T-cell (primary cell): ENCODE measurements at regions of chr16 and their contacts with region 1.

Region 1: GRCh38 chr16:11407047-11407982 is 62.1 kb downstream of the RMI2 start:
- DNase-seq: peak; percentile 17 to 79 (median 55)
- ATAC-seq: peak in 3 of 4 experiments; percentile 47 to 72 (median 62)
- H3K4me3 ChIP-seq: no peak overlapping the region
- H3K4me3 Mint-ChIP-seq: no peak overlapping the region
- H3K27ac ChIP-seq: no peak overlapping the region
- H3K27ac Mint-ChIP-seq: no peak overlapping the region
- H3K4me1 ChIP-seq: no peaks in the 10 kb centered on the region
- H3K4me1 Mint-ChIP-seq: peaks cover 0 to 3% (median 0%) of the 10 kb centered on the region in 3 donors
- H3K27me3 ChIP-seq: peaks cover 0 to 11% of the 10 kb centered on the region in 2 experiments
- H3K27me3 Mint-ChIP-seq: no peaks in the 10 kb centered on the region

Region 2: DNA sequence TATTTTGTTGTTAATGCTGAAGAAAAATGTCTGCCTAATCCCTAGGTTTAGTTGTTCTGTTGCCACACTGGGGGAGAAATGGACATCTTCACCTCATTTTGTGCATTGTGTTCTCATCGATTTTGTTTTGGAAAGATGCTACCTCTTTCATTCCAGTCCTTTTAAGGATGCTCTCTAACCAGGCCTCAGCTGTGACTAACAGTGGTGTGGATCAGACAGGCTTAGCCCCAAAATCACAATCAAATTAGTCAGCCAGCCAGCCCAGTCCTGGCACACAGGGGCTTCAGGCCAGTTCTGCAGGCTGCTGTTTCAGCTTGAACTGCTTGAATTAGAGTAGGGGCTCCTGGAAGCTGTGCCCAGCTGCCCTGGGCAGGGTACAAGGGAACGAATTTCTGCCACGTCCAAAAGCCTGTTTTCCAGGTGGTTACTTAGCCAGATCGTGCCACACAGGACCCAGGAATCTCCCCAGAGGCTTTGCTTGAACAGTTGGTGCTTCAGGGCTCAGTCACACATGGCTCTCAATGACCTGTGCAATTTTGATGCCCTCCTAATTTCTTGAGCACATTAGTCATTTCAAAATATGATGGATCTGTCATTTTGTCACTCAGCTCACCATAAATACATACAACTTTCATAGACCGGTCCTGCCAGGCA is 402.2 kb before region 1 on chr16:
- CTCF ChIA-PET with region 1: no interaction called
- POLR2A ChIA-PET with region 1: no interaction called
- DNase-seq: no peak
- ATAC-seq: no peak
- H3K4me3 ChIP-seq: no peak overlapping the region
- H3K4me3 Mint-ChIP-seq: no peak overlapping the region
- H3K27ac ChIP-seq: no peak overlapping the region
- H3K27ac Mint-ChIP-seq: no peak overlapping the region
- H3K4me1 ChIP-seq: no peaks in the 10 kb centered on the region
- H3K4me1 Mint-ChIP-seq: peaks cover 0 to 6% (median 0%) of the 10 kb centered on the region in 3 donors
- H3K27me3 ChIP-seq: no peaks in the 10 kb centered on the region
- H3K27me3 Mint-ChIP-seq: no peaks in the 10 kb centered on the region

Region 3: GRCh38 chr16:11619327-11619851 is 212.1 kb after region 1 on chr16:
- CTCF ChIA-PET with region 1: interaction called in 1 of 2 experiments, 12 read pairs
- POLR2A ChIA-PET with region 1: no interaction called
- DNase-seq: peak in 23 of 35 experiments; percentile 11 to 61 (median 34)
- ATAC-seq: peak; percentile 26 to 53 (median 44)
- H3K4me3 ChIP-seq: no peak overlapping the region
- H3K4me3 Mint-ChIP-seq: peak overlapping the region; percentile 34 to 91 (median 51)
- H3K27ac ChIP-seq: peak overlapping the region; percentile 73
- H3K27ac Mint-ChIP-seq: peak overlapping the region; percentile 98 to 99
- H3K4me1 ChIP-seq: peaks cover 33 to 88% of the 10 kb centered on the region in 2 experiments
- H3K4me1 Mint-ChIP-seq: peaks cover 67 to 80% (median 69%) of the 10 kb centered on the region in 3 donors
- H3K27me3 ChIP-seq: no peaks in the 10 kb centered on the region
- H3K27me3 Mint-ChIP-seq: no peaks in the 10 kb centered on the region

Region 4: GRCh38 chr16:11631214-11631613 is 223.9 kb after region 1 on chr16:
- CTCF ChIA-PET with region 1: interaction called in 1 of 2 experiments, 13 read pairs
- POLR2A ChIA-PET with region 1: no interaction called
- DNase-seq: no peak
- ATAC-seq: no peak
- H3K4me3 ChIP-seq: no peak overlapping the region
- H3K4me3 Mint-ChIP-seq: no peak overlapping the region
- H3K27ac ChIP-seq: no peak overlapping the region
- H3K27ac Mint-ChIP-seq: peak overlapping the region in 1 of 2 donors; percentile 55
- H3K4me1 ChIP-seq: peaks cover 14 to 25% of the 10 kb centered on the region in 2 experiments
- H3K4me1 Mint-ChIP-seq: peaks cover 33 to 45% (median 39%) of the 10 kb centered on the region in 3 donors
- H3K27me3 ChIP-seq: peaks cover 0 to 2% of the 10 kb centered on the region in 2 experiments
- H3K27me3 Mint-ChIP-seq: no peaks in the 10 kb centered on the region